ENCODE measurements at regions of chr19 and their contacts with region 1.

Region 1: GRCh38 chr19:1490311-1491113 is at the start of gene PCSK4:
- DNase-seq: peak; percentile 98
- ATAC-seq: peak; percentile 91
- H3K4me3 Mint-ChIP-seq: peak within 1 kb of the TSS; percentile 82
- H3K27ac Mint-ChIP-seq: peak within 1 kb of the TSS; percentile 98
- H3K4me1 Mint-ChIP-seq: peaks cover 6% of the 10 kb centered on the region
- H3K27me3 Mint-ChIP-seq: peaks cover 24% of the 10 kb centered on the region
- CTCF ChIP-seq: no peak
- total RNA-seq, gene PCSK4: 18.6 to 22.4 TPM (median 21.5 TPM) in 3 replicates

Region 2: DNA sequence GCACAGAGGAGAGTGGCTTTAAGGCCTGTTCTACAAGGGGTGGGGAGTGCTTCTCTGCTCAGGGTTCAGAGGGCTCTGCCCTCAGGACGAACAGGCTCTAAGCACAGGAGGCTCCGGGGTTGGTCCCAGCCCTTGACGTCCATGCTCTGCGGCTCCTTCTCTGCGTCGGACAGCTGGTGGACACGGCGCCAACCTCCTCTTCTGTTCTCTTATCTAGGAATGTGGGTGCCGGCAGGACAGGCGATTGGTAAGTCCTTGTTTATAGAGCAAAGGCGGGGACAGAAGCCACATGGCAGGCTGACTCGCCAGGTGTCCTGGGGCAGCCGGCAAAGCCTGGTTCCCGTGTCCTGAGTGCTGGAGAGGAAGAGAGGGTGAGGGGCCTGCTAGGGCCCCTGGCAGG is 60.8 kb before region 1 on chr19:
- CTCF ChIA-PET with region 1: no interaction called
- POLR2A ChIA-PET with region 1: no interaction called
- DNase-seq: no peak
- ATAC-seq: no peak
- H3K4me3 Mint-ChIP-seq: no peak overlapping the region
- H3K27ac Mint-ChIP-seq: no peak overlapping the region
- H3K4me1 Mint-ChIP-seq: 0 out of 2 replicates have a peak, but pooled peaks cover 3% of the 10 kb centered on the region
- H3K27me3 Mint-ChIP-seq: no peaks in the 10 kb centered on the region
- CTCF ChIP-seq: no peak

Region 3: GRCh38 chr19:1465191-1466016 is 25.1 kb before region 1 on chr19:
- CTCF ChIA-PET with region 1: interaction called, 13 read pairs
- POLR2A ChIA-PET with region 1: no interaction called
- DNase-seq: peak; percentile 74
- ATAC-seq: peak; percentile 20
- H3K4me3 Mint-ChIP-seq: no peak overlapping the region
- H3K27ac Mint-ChIP-seq: no peak overlapping the region
- H3K4me1 Mint-ChIP-seq: peaks cover 2% of the 10 kb centered on the region; the same call in 1 of the 2 replicates
- H3K27me3 Mint-ChIP-seq: peaks cover 64% of the 10 kb centered on the region
- CTCF ChIP-seq: no peak

Region 4: DNA sequence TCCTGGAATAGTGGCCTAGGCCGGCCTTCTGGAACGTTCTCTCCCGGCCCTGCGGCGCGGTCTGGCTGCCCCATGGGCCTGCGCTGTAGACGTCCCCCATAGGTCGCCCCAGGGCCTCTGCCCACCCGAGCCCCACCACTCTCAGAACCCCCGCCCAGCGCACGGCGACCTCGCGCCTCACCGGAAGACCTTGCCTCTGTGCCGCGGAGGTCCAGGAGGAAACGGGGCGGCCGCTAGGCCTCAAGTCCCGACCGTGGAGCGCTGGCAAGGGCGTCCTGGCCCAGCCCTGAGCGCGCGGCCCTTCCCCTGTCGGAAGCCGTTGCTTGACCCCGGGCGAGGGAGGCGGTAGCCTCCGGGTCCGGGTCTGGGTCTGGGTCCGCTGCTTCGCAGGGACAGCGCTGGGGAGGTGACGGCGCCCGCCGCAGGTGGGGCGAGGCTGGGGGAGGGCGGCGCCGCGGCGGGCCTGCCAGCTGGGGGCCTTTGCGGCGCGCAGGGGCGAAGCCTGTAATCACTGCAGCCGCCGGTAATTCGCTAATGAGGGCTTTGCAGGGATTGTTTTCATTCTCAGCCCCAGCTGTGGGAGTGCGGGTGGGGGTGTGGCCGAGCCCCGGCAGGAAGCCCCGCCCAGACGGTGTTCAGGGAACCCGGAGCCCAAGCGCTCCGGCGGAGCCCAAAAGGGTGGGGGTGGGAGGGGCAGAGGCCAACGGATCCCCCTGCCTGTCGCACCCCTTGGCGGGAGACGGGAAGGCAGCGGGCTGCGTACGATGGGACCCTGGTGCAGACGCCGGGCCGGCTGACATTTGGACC is 20.1 kb before region 1 on chr19:
- CTCF ChIA-PET with region 1: interaction called, 13 read pairs
- POLR2A ChIA-PET with region 1: interaction called, 3 read pairs
- DNase-seq: peak; percentile 77
- ATAC-seq: peak; percentile 24
- H3K4me3 Mint-ChIP-seq: peak overlapping the region; percentile 61
- H3K27ac Mint-ChIP-seq: no peak overlapping the region
- H3K4me1 Mint-ChIP-seq: peaks cover 5% of the 10 kb centered on the region; the same call in 1 of the 2 replicates
- H3K27me3 Mint-ChIP-seq: peaks cover 61% of the 10 kb centered on the region
- CTCF ChIP-seq: no peak

Region 5: GRCh38 chr19:1503089-1503933 is 12.8 kb after region 1 on chr19:
- CTCF ChIA-PET with region 1: interaction called, 15 read pairs
- POLR2A ChIA-PET with region 1: no interaction called
- DNase-seq: peak; percentile 82
- ATAC-seq: peak; percentile 8
- H3K4me3 Mint-ChIP-seq: peak overlapping the region; percentile 50
- H3K27ac Mint-ChIP-seq: no peak overlapping the region
- H3K4me1 Mint-ChIP-seq: no peaks in the 10 kb centered on the region; the same call in 1 of the 2 replicates
- H3K27me3 Mint-ChIP-seq: peaks cover 41% of the 10 kb centered on the region
- CTCF ChIP-seq: peak; percentile 81

Region 6: GRCh38 chr19:1855040-1855827 is 364.7 kb after region 1 on chr19:
- CTCF ChIA-PET with region 1: interaction called, 11 read pairs
- POLR2A ChIA-PET with region 1: no interaction called
- DNase-seq: peak; percentile 93
- ATAC-seq: peak; percentile 80
- H3K4me3 Mint-ChIP-seq: peak overlapping the region; percentile 63
- H3K27ac Mint-ChIP-seq: peak overlapping the region; percentile 91
- H3K4me1 Mint-ChIP-seq: peaks cover 48% of the 10 kb centered on the region
- H3K27me3 Mint-ChIP-seq: no peaks in the 10 kb centered on the region; the same call in 1 of the 2 replicates
- CTCF ChIP-seq: no peak